HEK293 (cell line): ENCODE measurements at regions of chr1 and their contacts with region 1.

Region 1: GRCh38 chr1:85224734-85225623 is 24.2 kb upstream of the SYDE2 start:
- H3K4me3 ChIP-seq: no peak overlapping the region
- H3K27ac ChIP-seq: peak overlapping the region; percentile 67
- H3K4me1 ChIP-seq: peaks cover 14% of the 10 kb centered on the region
- CTCF ChIP-seq: no peak

Region 2: DNA sequence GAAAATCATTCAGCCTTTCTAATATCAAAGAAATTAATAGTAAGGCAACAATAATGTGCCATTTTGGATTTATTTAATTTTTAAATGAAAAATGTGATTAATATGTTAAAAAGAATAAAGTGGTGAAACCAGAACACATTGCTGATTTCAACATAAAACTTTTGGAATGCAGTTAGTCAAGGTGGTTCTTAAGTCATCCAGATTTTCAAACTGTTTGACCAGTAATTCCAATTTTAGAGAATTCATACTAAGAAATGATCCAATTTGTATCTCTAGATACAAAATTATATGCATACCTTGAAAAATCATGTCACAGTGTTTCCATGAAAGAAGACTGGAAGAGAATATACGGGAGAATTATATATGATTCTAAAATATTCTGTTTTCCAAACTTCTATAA is 122.5 kb before region 1 on chr1:
- CTCF ChIA-PET with region 1: no interaction called
- POLR2A ChIA-PET with region 1: no interaction called
- H3K4me3 ChIP-seq: no peak overlapping the region
- H3K27ac ChIP-seq: no peak overlapping the region
- H3K4me1 ChIP-seq: no peaks in the 10 kb centered on the region
- CTCF ChIP-seq: no peak

Region 3: GRCh38 chr1:85148524-85149250 is 76.3 kb before region 1 on chr1:
- CTCF ChIA-PET with region 1: no interaction called
- POLR2A ChIA-PET with region 1: no interaction called
- H3K4me3 ChIP-seq: no peak overlapping the region
- H3K27ac ChIP-seq: no peak overlapping the region
- H3K4me1 ChIP-seq: peaks cover 8% of the 10 kb centered on the region
- CTCF ChIP-seq: no peak

Region 4: GRCh38 chr1:85200870-85201339 is 24.1 kb before region 1 on chr1 and contains the start of gene SYDE2:
- CTCF ChIA-PET with region 1: interaction called, 5 read pairs
- POLR2A ChIA-PET with region 1: interaction called, 19 read pairs
- H3K4me3 ChIP-seq: peak within 1 kb of the TSS; percentile 98
- H3K27ac ChIP-seq: peak within 1 kb of the TSS; percentile 96
- H3K4me1 ChIP-seq: peaks cover 8% of the 10 kb centered on the region; the same call in 1 of the 2 replicates
- CTCF ChIP-seq: no peak; the same call in 1 of the 2 replicates